ENCODE measurements at regions of chr11 and their contacts with region 1.

Region 1: DNA sequence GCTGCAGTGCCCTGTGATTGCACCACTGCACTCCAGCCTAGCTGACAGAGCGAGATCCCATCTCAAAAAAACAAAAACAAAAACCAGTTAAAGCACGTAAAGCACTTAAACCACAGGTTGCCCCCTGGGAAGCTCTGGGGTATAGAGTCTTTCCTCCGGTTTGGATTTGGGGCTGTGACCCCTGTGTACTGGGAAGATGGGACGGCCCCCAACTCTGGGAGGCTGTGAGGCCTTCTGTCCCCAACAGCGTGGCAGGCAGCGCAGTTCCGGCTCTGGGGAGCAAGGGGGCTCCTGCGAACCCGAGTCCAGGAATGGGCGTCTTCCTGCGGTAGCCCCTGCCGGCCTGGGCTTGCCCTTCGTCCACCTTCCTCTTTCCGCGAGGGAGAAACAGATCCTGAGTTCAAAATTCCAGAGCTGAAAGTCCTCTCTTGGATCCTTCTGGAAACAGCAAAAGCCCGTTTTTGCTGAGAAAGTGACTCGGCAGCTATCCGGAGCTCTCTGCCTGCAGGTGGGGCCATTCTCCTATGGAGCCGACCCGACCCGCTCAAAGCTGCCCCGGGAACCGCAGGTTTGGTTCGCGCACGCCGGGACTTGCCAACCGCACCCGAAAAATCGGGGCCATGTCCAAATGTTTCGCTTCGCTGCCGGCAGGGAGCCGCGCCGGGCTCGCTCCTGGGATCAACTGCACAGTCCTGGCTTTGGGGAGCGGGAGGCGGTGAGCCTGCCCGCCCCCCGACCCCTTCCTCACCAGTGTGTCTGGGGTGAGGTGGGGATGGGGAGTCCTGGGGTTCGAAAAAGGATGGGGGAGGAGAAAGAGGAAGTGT is 36.3 kb upstream of the POLA2 start:
- DNase-seq: peak; percentile 87
- H3K4me3 Mint-ChIP-seq: peak overlapping the region; percentile 85
- H3K27ac Mint-ChIP-seq: no peak overlapping the region
- H3K4me1 Mint-ChIP-seq: peaks cover 9% of the 10 kb centered on the region
- H3K27me3 Mint-ChIP-seq: peaks cover 26% of the 10 kb centered on the region

Region 2: GRCh38 chr11:65180877-65181568 is 44.5 kb before region 1 on chr11:
- intact Hi-C with region 1: no loop called
- DNase-seq: peak; percentile 90
- H3K4me3 Mint-ChIP-seq: peak overlapping the region; percentile 84
- H3K27ac Mint-ChIP-seq: peak overlapping the region; percentile 72
- H3K4me1 Mint-ChIP-seq: peaks cover 10% of the 10 kb centered on the region
- H3K27me3 Mint-ChIP-seq: peaks cover 8% of the 10 kb centered on the region

Region 3: GRCh38 chr11:65261591-65262380 is 36.3 kb after region 1 on chr11 and contains the start of gene POLA2:
- intact Hi-C with region 1: loop called (anchors 5 kb)
- DNase-seq: peak; percentile 99
- H3K4me3 Mint-ChIP-seq: peak within 1 kb of the TSS; percentile 95
- H3K27ac Mint-ChIP-seq: peak within 1 kb of the TSS; percentile 99
- H3K4me1 Mint-ChIP-seq: peaks cover 48% of the 10 kb centered on the region
- H3K27me3 Mint-ChIP-seq: peaks cover 4% of the 10 kb centered on the region
- total RNA-seq, gene POLA2: 77.4 and 82.8 TPM in 2 replicates

Measured in activated CD4-positive, alpha-beta T cell treated with anti-CD3 and anti-CD28 coated beads, Interleukin-2, amount 10 ng/mL, durations not matched to agents 24 days and 14 days (primary cell).